CD14-positive monocyte (primary cell): ENCODE measurements at regions of chr11 and their contacts with region 1.

Region 1: DNA sequence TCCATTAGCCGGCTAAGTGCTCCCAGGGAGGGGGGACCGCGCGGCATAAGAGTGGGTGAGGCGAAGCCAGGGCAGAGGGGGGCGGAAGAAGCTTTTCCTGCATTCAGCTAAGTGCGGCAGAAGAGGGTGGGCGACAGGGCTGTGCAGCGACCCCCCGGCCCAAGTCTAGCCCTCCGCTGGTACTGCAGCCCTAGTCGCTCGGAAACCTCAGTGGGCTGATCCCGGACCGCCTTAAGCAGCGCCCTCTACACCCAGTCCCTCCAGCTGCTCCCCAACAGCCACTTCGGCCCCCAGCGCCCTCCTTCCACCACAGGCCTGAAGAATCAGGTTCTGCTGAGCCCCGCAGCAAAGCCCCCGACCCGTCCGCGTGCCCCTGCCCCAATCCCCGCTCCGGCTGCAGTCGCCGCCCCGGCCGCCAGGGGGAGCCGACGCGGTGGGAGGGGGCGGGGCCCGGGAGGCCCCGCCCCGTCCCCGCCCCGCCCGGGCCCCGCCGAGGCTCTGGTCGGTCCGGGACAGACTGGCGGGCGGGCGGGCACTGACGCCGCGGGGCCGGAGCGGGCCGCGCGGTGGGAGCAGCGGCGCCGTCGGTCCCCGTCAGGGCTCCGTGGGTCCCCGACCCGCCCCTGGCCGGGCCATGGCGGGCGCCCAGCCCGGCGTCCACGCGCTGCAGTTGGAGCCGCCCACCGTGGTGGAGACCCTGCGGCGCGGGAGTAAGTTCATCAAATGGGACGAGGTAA is at the start of gene PLCB3:
- DNase-seq: peak; percentile 22 to 64 (median 61)
- H3K4me3 ChIP-seq: peak within 1 kb of the TSS; percentile 75 to 87 (median 83)
- H3K4me3 Mint-ChIP-seq: peak within 1 kb of the TSS; percentile 89 to 96
- H3K27ac ChIP-seq: peak within 1 kb of the TSS in 1 of 2 donors; percentile 74
- H3K27ac Mint-ChIP-seq: peak within 1 kb of the TSS; percentile 73 to 90 (median 80)
- H3K4me1 ChIP-seq: peaks cover 38 to 55% of the 10 kb centered on the region in 2 donors
- H3K4me1 Mint-ChIP-seq: peaks cover 38% of the 10 kb centered on the region
- H3K27me3 ChIP-seq: no peaks in the 10 kb centered on the region
- H3K27me3 Mint-ChIP-seq: peaks cover 3 to 10% (median 8%) of the 10 kb centered on the region in 3 donors
- CTCF ChIP-seq: peak; percentile 83
- polyA plus RNA-seq, gene PLCB3: 1.1 to 17.8 (median 1.4) TPM

Region 2: GRCh38 chr11:64269380-64270234 is 18.4 kb after region 1 on chr11:
- intact Hi-C with region 1: loop called (anchors 2 kb)
- DNase-seq: peak; percentile 98 to 100 (median 99)
- H3K4me3 ChIP-seq: peak overlapping the region; percentile 61 to 95 (median 67)
- H3K4me3 Mint-ChIP-seq: peak overlapping the region; percentile 94 to 98
- H3K27ac ChIP-seq: peak overlapping the region; percentile 84 to 97
- H3K27ac Mint-ChIP-seq: peak overlapping the region; percentile 96 to 99 (median 98)
- H3K4me1 ChIP-seq: peaks cover 29 to 34% of the 10 kb centered on the region in 2 donors
- H3K4me1 Mint-ChIP-seq: peaks cover 29% of the 10 kb centered on the region
- H3K27me3 ChIP-seq: no peaks in the 10 kb centered on the region
- H3K27me3 Mint-ChIP-seq: no peaks in the 10 kb centered on the region
- CTCF ChIP-seq: peak; percentile 17

Region 3: DNA sequence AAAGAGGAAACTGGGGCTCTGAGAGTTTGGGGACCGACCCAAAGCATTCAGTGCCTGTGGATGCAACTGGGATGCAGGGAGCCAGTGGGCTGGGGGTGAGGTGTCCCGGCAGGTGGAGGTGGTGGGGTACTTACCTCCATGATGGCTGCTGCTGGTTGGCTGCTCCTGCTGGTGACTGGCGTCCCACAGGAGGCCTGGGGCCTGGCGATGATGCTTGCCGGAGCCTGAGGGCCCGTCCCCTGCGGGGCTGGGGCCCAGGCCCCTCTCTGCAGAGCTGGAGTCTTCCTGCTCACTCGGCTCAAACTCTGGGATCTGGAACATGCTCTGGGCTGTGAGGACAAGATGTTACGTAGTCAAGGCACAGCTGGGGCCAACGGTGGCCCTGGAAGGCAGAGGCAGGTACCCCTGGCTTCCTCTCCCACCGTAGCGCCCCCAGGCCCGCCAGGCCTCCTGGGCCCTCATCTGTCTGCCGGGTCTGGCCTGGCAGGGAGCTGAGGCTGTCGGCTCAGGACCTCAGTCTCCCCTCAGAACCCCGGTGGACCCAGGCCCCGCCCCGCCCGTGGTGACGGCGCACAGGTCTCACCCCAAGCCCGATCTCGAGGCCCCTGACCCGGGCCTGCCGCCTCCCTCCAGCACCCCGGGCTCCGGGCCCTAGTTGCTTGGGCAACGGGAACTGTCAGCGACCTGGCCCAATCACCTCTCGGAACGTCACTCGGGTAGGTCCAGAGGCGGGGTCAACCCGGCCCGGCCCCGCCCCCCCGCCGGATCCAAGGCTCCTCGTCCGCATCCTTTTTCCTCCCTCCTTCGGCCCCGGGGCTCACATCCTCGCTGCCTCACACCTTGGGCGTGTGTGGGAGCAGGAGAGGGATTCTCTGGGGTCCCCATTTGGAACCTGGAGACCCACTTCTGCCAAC is 33.1 kb after region 1 on chr11 and contains the start of gene BAD:
- intact Hi-C with region 1: loop called in 1 of 2 experiments (anchors 5 kb)
- DNase-seq: peak; percentile 91 to 93 (median 92)
- H3K4me3 ChIP-seq: peak within 1 kb of the TSS; percentile 74 to 98 (median 81)
- H3K4me3 Mint-ChIP-seq: peak within 1 kb of the TSS; percentile 86 to 90
- H3K27ac ChIP-seq: peak within 1 kb of the TSS; percentile 91 to 100
- H3K27ac Mint-ChIP-seq: peak within 1 kb of the TSS; percentile 92 to 98 (median 96)
- H3K4me1 ChIP-seq: peaks cover 20 to 24% of the 10 kb centered on the region in 2 donors
- H3K4me1 Mint-ChIP-seq: peaks cover 24% of the 10 kb centered on the region
- H3K27me3 ChIP-seq: no peaks in the 10 kb centered on the region
- H3K27me3 Mint-ChIP-seq: peaks cover under 1 to 10% (median 2%) of the 10 kb centered on the region in 3 donors
- CTCF ChIP-seq: no peak
- polyA plus RNA-seq, gene BAD: 21.1 to 63.2 (median 48.7) TPM